Head of caudate nucleus (tissue), 42 donors: ENCODE measurements at regions of chr16 and their contacts with region 1.

Region 1: DNA sequence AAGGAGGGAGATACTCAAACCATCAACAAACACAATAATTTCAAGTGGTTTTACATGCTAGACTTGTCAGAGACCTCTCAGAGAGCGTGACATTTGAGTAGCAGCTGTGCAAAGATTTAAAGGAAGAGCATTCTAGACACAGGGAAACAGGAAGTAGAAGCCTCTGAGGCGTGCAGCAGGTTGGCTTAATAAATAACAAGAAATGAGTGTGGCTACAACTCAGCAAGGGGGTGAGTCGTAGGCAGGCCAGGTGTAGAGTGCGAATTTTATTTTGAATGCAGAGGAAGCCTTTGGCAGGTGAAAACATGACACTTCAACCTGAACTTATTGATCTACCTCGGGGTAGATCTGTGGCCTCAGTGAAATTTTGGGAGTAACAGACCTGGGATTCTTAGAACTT is 73.2 kb upstream of the MRTFB start:
- DNase-seq: no peak

Region 2: DNA sequence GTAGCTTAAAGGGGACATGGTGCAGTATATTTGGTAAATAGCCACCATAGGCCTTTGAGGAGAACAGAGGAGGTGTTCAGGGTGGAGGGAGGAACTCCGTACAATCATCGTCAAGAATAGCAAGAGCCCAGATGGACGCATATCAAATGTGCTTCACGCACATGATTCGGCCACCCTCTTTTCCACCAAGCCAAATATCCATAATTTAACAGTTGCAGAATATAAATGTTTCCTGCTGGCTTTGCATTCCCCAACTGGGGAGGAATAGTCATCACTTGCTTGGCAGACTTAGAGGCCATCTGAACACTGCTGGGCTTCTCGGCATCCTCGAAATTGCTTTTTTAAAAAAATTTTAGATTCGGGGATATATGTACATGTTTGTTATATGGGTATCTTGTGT is 189.8 kb before region 1 on chr16:
- intact Hi-C with region 1: no loop called
- DNase-seq: no peak

Region 3: DNA sequence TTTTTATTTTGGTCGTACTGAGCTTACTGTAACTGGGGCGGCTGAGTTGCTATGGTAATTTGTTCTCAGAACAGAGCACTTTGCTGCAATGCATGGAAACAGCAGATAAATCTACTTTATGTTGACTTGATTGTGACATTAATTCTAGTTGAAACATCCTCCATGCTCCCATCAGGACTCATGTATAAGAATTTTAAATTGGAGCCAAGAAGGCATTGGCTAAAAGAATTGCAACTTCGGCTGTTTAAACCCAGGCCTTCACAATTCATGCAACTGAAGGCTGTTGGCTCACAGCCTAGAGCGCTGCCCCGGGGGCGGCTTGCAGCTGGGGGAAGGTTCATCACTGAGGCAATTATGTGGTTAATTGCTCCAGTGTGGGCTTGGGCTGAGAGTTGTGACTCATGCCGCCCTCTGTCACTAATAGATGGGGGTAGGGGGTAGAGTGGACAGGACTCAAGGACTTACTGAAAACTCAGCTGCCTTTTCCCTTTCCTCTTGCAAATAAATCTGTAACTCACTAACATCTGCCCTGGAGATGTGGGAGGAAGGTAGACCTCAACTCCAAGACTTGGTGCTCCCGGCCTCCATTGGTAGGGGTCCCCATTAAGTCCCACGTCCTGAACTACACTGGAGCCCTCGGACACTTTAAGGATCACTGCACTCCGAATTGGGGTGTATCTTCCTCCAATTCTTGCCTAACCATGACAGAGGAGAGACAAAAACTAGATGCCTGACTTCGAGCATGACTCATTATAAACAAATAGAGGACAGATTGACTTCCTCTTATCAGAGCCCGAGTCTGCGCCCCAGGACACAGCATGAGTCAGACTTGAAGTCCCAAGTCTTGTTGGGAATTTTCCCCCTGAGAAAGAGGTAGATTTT is 40.5 kb before region 1 on chr16:
- intact Hi-C with region 1: loop called (anchors 5 kb)
- DNase-seq: peak; percentile 34 to 91 (median 66)